ENCODE measurements at regions of chr4 and their contacts with region 1.

Region 1: DNA sequence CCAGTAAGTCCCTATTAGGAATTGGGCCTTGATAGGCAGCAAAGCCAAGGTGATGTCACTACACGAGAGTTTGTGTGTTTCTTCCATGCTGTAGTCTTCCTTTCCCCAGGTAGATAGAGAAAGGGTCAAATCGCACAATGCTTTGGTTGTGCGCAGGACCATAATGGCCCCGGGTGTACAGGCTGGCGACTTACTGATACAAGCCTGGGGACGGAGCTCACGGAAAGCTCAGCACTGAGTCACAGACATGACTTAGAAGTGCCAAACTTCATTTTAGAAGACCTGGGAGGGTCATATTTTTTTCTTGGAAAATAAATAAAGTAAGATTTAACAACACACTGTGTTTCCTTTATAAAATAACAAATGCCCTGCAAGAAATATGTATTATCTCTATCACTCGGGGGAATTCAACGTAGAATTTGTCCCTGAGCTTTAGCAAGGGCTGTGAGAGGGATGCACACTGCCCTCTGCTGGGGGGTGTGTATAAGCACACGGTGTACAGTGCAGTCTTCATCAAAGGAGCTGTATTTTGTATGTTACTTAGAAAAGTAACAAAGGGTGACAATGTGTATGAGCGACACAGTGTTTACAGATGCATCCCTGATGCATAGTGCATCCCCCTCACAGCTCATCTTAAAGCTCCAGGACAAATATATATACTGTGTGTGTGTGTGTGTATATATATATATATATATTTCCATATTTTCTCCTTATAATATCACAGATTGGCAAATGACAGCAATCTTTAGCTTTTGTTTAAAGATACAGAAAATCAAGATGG is 254.5 kb upstream of the VEGFC start:
- DNase-seq: peak; percentile 59
- ATAC-seq: peak; percentile 93
- H3K4me3 ChIP-seq: no peak overlapping the region
- H3K27ac ChIP-seq: no peak overlapping the region
- H3K4me1 ChIP-seq: 0 out of 4 replicates have a peak, but pooled peaks cover 0 to 4% of the 10 kb centered on the region in 2 experiments
- H3K27me3 ChIP-seq: no peaks in the 10 kb centered on the region
- CTCF ChIP-seq: peak; percentile 79 to 85 (median 82)
- POLR2A ChIP-seq: no peak
- RAD21 ChIP-seq: peak; percentile 80

Region 2: DNA sequence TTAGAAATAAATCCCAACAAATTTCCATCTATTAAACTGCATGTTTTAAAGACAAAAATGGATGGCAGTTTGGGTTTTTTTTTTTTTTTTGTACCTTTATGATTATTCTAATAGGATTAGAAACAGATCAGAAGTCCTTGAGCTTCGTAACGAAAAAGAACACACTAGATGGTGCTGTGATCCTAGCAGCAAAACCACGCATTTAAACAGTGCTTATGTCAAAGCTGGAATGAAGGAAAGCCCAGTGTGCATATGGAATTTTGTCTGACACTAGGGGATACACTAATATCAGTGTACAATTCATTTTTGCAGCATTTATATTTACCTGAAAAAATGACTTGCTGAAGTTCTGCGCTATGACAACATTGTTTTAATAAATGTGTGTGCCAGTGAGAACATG is 483.7 kb before region 1 on chr4:
- CTCF ChIA-PET with region 1: interaction called, 15 read pairs
- POLR2A ChIA-PET with region 1: no interaction called
- RAD21 ChIA-PET with region 1: no interaction called
- intact Hi-C with region 1: no loop called
- DNase-seq: no peak
- ATAC-seq: no peak
- H3K4me3 ChIP-seq: no peak overlapping the region
- H3K27ac ChIP-seq: no peak overlapping the region
- H3K4me1 ChIP-seq: no peaks in the 10 kb centered on the region
- H3K27me3 ChIP-seq: no peaks in the 10 kb centered on the region
- CTCF ChIP-seq: peak in 1 of 3 experiments; percentile 25; a peak in 1 of 6 replicates
- POLR2A ChIP-seq: no peak
- RAD21 ChIP-seq: peak; percentile 38

Region 3: GRCh38 chr4:176964116-176964691 is 83.1 kb before region 1 on chr4:
- CTCF ChIA-PET with region 1: interaction called, 17 read pairs
- POLR2A ChIA-PET with region 1: no interaction called
- RAD21 ChIA-PET with region 1: interaction called, 5 to 7 read pairs
- intact Hi-C with region 1: no loop called
- DNase-seq: peak; percentile 16
- ATAC-seq: peak; percentile 67
- H3K4me3 ChIP-seq: no peak overlapping the region
- H3K27ac ChIP-seq: no peak overlapping the region
- H3K4me1 ChIP-seq: no peaks in the 10 kb centered on the region
- H3K27me3 ChIP-seq: no peaks in the 10 kb centered on the region
- CTCF ChIP-seq: peak; percentile 33 to 73 (median 61); a peak in 4 of 6 replicates
- POLR2A ChIP-seq: no peak
- RAD21 ChIP-seq: peak; percentile 51

Region 4: DNA sequence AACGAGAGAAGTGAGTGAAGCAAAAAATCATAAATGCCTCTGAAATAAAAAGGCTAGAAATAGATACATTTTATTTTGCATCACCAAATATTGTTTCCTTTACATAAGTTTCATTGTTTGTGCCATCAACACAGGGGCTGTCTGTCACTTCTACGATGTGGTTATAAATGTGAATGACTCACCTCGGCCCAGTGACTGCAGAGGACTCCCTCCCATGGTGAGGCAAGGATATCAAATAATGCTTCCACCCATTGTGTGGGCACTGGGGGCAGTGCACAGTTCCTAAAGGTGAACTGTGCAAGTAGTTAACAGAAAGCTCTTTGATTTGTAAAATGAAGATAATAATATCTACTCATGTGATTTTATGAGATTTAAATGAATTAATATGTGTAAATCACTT is 32.1 kb after region 1 on chr4:
- CTCF ChIA-PET with region 1: interaction called, 12 read pairs
- POLR2A ChIA-PET with region 1: no interaction called
- RAD21 ChIA-PET with region 1: no interaction called
- intact Hi-C with region 1: no loop called
- DNase-seq: no peak
- ATAC-seq: peak; percentile 86
- H3K4me3 ChIP-seq: no peak overlapping the region
- H3K27ac ChIP-seq: no peak overlapping the region
- H3K4me1 ChIP-seq: 0 out of 4 replicates have a peak, but pooled peaks cover 0 to 3% of the 10 kb centered on the region in 2 experiments
- H3K27me3 ChIP-seq: no peaks in the 10 kb centered on the region
- CTCF ChIP-seq: peak in 2 of 3 experiments; percentile 12; a peak in 2 of 6 replicates
- POLR2A ChIP-seq: no peak
- RAD21 ChIP-seq: no peak